Lower leg skin (tissue), 4 donors: ENCODE measurements at regions of chr21 and their contacts with region 1.

Region 1: GRCh38 chr21:42818328-42818749 is 61.0 kb downstream of the WDR4 start:
- DNase-seq: peak; percentile 46 to 92
- H3K4me3 ChIP-seq: no peak overlapping the region
- CTCF ChIP-seq: peak in 1 of 3 donors; percentile 47
- POLR2A ChIP-seq: no peak

Region 2: GRCh38 chr21:42594616-42595282 is 223.6 kb before region 1 on chr21:
- intact Hi-C with region 1: loop called (anchors 5 kb)
- DNase-seq: peak in 1 of 2 donors; percentile 81
- H3K4me3 ChIP-seq: no peak overlapping the region
- CTCF ChIP-seq: no peak
- POLR2A ChIP-seq: no peak

Region 3: DNA sequence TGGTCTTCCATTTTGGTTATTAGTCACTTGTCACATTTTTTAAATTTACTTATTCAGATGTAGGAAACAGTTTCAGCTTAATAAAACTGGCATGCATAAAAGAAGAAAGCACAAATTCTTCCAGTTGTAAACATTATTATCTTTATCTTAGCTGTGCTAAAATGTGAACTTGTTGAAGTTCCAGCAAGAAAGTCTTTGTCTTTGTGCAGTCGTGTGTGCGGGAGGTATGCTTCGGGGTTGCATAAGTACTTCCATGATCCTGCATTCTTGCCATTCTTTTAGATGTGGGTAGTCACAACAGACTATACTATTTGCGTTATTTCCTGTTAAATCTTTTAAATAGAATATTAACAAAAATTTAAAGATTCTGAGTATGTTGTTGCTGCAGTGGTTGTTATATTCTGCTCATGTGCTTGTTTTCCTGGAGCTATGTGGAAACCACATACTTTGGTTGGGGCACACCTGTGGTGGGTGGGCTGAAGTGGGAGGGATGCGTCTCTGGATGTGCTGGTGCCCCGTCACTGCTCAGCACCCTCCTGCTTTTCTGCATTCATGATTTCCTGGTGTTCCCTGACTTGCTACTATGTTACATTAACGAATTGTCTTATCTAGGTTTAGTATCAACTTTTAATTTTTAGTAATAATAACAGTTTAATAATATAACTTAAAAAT is 207.4 kb after region 1 on chr21:
- intact Hi-C with region 1: no loop called
- DNase-seq: no peak
- H3K4me3 ChIP-seq: no peak overlapping the region
- CTCF ChIP-seq: no peak
- POLR2A ChIP-seq: no peak